Gastrocnemius medialis (tissue), 4 donors: ENCODE measurements at regions of chr13 and their contacts with region 1.

Region 1: DNA sequence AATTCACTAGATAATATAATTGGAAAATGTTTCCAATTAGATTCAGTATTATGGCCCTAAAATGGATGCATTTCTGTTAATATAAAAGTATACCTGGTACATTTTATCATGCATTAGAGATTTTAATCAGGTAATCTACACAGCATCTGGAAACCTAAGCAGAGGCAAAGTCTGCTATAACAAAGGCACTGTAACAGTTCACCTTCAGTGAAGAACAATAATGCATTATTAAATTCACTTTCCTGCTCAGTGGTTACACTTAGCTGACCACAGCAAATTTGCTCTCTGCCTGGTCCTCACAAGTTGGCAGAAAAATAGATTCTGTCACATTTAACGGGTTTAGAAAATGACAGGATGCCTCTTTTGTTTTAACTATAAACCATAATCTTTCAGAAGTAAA is 326.9 kb downstream of the DACH1 start:
- DNase-seq: no peak
- ATAC-seq: no peak
- H3K4me3 ChIP-seq: no peak overlapping the region
- H3K27ac ChIP-seq: no peak overlapping the region
- H3K4me1 ChIP-seq: no peaks in the 10 kb centered on the region
- H3K27me3 ChIP-seq: no peaks in the 10 kb centered on the region
- CTCF ChIP-seq: no peak
- POLR2A ChIP-seq: no peak

Region 2: GRCh38 chr13:71448231-71448630 is 91.9 kb before region 1 on chr13:
- in situ Hi-C with region 1: no loop called
- intact Hi-C with region 1: no loop called
- DNase-seq: no peak
- ATAC-seq: no peak
- H3K4me3 ChIP-seq: no peak overlapping the region
- H3K27ac ChIP-seq: no peak overlapping the region
- H3K4me1 ChIP-seq: no peaks in the 10 kb centered on the region
- H3K27me3 ChIP-seq: no peaks in the 10 kb centered on the region
- CTCF ChIP-seq: no peak
- POLR2A ChIP-seq: no peak

Region 3: DNA sequence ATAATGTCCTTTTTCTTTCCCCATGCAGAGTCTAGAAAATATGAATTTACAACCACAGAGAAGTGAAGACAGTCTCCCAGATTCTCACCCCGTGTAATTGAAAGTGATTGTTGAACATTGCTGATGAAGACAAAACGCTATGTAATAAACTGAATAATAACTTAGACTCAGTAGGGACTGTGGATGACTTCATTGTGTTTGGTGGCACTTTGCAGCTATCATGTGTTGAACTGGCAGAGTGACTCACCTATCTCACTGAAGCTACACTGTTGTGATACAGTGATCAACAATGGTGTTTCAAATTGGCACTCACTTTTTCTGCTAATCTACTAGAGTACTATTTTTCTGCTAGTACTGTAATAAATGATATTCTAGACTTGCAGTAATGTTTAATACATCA is 65.6 kb after region 1 on chr13:
- in situ Hi-C with region 1: loop called in 1 of 4 experiments (anchors 10 kb)
- intact Hi-C with region 1: no loop called
- DNase-seq: no peak
- ATAC-seq: no peak
- H3K4me3 ChIP-seq: no peak overlapping the region
- H3K27ac ChIP-seq: no peak overlapping the region
- H3K4me1 ChIP-seq: no peaks in the 10 kb centered on the region
- H3K27me3 ChIP-seq: no peaks in the 10 kb centered on the region
- CTCF ChIP-seq: no peak
- POLR2A ChIP-seq: no peak

Region 4: GRCh38 chr13:71797517-71797916 is 257.4 kb after region 1 on chr13:
- in situ Hi-C with region 1: no loop called
- intact Hi-C with region 1: no loop called
- DNase-seq: no peak
- ATAC-seq: no peak
- H3K4me3 ChIP-seq: no peak overlapping the region
- H3K27ac ChIP-seq: no peak overlapping the region
- H3K4me1 ChIP-seq: no peaks in the 10 kb centered on the region
- H3K27me3 ChIP-seq: no peaks in the 10 kb centered on the region
- CTCF ChIP-seq: no peak
- POLR2A ChIP-seq: no peak